A673 (cell line): ENCODE measurements at regions of chrX and their contacts with region 1.

Region 1: DNA sequence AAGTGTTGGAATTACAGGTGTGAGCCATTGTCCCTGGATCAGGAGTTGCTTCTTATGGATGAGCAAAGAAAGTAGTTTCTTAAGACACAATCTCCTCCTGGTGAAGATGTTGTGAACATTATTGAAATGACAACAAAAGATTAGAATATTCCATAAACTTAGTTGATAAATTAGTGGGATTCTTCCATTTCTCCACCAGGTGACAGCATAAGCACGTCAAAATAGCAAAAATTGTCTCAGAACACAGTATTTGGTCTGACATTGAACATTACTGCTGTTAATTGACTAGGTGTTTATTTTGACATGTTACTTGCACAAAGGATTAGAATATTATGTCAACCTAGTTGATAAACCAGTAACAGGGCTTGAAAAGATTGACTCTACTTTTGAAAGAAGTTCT is 21.6 kb downstream of the CLDN34 start:
- DNase-seq: peak; percentile 25
- H3K4me3 ChIP-seq: no peak overlapping the region
- H3K27ac ChIP-seq: no peak overlapping the region
- H3K4me1 ChIP-seq: no peaks in the 10 kb centered on the region
- H3K27me3 ChIP-seq: no peaks in the 10 kb centered on the region
- CTCF ChIP-seq: peak; percentile 53

Region 2: GRCh38 chrX:8232406-8232805 is 1756.4 kb before region 1 on chrX:
- CTCF ChIA-PET with region 1: no interaction called
- POLR2A ChIA-PET with region 1: no interaction called
- intact Hi-C with region 1: no loop called
- DNase-seq: no peak
- H3K4me3 ChIP-seq: no peak overlapping the region
- H3K27ac ChIP-seq: no peak overlapping the region
- H3K4me1 ChIP-seq: no peaks in the 10 kb centered on the region
- H3K27me3 ChIP-seq: no peaks in the 10 kb centered on the region
- CTCF ChIP-seq: no peak

Region 3: DNA sequence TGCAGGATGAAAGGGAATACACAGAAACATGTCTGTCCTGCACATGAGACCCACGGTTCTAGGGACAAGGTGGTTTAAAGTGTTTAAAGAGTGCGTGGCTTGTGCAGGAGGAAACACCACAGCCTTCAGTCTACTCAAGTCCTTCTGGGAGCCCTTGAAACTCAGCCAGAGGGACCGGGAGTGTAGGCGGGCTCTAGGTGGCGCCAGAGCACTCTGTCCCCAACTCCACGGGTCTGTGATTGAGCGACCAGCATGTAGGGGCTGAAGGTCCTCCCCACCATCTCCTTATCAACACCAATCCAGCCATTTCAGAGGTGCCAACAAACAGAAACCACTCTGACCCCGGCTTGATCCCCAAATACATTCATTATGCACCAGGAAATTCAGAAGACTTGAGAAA is 103.6 kb before region 1 on chrX:
- CTCF ChIA-PET with region 1: no interaction called
- POLR2A ChIA-PET with region 1: no interaction called
- intact Hi-C with region 1: loop called (anchors 5 kb)
- DNase-seq: peak; percentile 77
- H3K4me3 ChIP-seq: no peak overlapping the region
- H3K27ac ChIP-seq: no peak overlapping the region
- H3K4me1 ChIP-seq: no peaks in the 10 kb centered on the region
- H3K27me3 ChIP-seq: no peaks in the 10 kb centered on the region
- CTCF ChIP-seq: peak; percentile 80